Right ventricle myocardium inferior (tissue), 1 donor: ENCODE measurements at regions of chr1 and their contacts with region 1.

Region 1: GRCh38 chr1:157969697-157970485 is 23.6 kb upstream of the KIRREL1 start:
- DNase-seq: no peak
- ATAC-seq: no peak

Region 2: DNA sequence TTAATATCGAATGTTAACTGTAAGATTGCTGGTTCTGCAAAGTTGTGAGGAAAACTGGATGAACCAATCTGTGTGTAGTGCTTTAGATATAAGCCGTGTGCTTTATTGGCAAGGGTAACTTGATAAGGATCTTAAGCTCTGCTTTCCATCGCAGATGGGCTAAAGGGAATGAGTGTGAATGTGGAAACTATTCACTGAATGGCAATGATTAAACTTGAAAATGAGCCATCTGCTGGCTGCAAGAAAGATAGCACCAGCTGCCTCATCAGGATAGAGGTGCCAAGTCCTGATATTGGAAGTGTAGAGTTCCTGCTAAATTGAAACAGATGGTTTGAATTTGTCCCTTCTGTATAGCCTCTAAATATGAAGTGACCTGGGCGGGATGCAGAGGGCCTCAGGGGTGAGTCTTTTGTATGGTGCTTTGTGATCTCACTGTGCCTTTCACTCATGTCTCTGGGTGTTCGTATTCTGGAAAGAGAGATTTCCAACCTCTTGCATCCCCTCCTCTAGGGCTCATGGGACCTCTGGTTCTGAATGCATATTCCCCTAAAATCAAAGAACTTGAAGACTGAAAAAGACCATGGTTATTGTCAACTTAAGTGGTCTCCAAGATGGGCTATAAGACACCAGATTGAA is 278.5 kb before region 1 on chr1:
- intact Hi-C with region 1: no loop called
- DNase-seq: no peak
- ATAC-seq: no peak

Region 3: DNA sequence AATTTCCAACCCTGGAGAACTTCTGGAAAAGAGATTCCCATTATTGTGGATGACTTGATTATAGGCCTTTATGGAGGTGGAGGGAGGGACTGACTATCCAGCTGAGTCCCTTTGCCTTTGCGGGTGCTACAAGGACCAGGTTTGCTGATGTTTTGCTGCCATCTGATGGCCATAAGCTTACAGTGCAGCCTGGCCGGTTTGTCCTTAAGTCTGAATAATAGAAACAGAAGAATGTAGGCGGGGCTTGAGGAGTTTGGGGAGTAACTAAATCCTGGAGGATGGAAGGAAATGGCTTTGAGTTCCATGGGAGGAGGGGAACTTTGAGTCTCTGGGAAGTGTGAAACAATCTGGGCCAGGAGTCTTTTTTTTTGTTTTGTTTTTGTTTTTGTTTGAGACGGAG is 155.1 kb after region 1 on chr1:
- intact Hi-C with region 1: loop called (anchors 2 kb)
- DNase-seq: peak; percentile 82
- ATAC-seq: peak; percentile 97

Region 4: DNA sequence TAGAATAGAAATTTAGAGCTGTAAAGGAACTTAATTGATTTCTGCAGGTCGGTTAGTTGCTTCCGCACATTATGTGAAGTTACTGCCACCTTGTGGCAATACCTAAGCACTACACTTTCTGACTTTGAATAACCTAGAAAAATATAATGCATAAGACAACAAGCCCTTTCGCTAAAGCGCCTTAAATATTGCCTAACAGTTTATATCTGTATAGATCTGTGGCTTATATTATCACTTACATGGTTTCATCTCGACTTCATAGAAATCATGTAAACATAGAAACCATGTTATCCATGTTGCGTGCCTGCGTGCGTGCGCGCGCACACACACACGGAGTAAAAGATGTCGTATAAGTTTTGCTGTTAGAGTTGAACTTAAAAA is 1028.9 kb after region 1 on chr1:
- intact Hi-C with region 1: loop called (anchors 5 kb)
- DNase-seq: peak; percentile 82
- ATAC-seq: peak; percentile 48